ENCODE measurements at regions of chr7 and their contacts with region 1.

Region 1: GRCh38 chr7:158662610-158663427 is 41.8 kb downstream of the NCAPG2 start:
- DNase-seq: no peak
- H3K4me3 ChIP-seq: no peak overlapping the region
- H3K27ac ChIP-seq: peak overlapping the region in 1 of 2 experiments; percentile 74; a peak in 1 of 4 replicates
- H3K4me1 ChIP-seq: peaks cover 0 to 24% of the 10 kb centered on the region in 2 experiments; a peak in 1 of 4 replicates
- H3K27me3 ChIP-seq: no peaks in the 10 kb centered on the region
- CTCF ChIP-seq: no peak
- EP300 ChIP-seq: no peak
- RAD21 ChIP-seq: no peak

Region 2: GRCh38 chr7:158646766-158647447 is 15.9 kb before region 1 on chr7:
- CTCF ChIA-PET with region 1: interaction called, 15 read pairs
- POLR2A ChIA-PET with region 1: no interaction called
- DNase-seq: peak; percentile 58
- H3K4me3 ChIP-seq: no peak overlapping the region
- H3K27ac ChIP-seq: no peak overlapping the region
- H3K4me1 ChIP-seq: peaks cover 11 to 12% of the 10 kb centered on the region in 2 experiments; a peak in 3 of 4 replicates
- H3K27me3 ChIP-seq: no peaks in the 10 kb centered on the region
- CTCF ChIP-seq: peak; percentile 69
- EP300 ChIP-seq: no peak
- RAD21 ChIP-seq: peak; percentile 28